T-cell (primary cell): ENCODE measurements at regions of chr11 and their contacts with region 1.

Region 1: DNA sequence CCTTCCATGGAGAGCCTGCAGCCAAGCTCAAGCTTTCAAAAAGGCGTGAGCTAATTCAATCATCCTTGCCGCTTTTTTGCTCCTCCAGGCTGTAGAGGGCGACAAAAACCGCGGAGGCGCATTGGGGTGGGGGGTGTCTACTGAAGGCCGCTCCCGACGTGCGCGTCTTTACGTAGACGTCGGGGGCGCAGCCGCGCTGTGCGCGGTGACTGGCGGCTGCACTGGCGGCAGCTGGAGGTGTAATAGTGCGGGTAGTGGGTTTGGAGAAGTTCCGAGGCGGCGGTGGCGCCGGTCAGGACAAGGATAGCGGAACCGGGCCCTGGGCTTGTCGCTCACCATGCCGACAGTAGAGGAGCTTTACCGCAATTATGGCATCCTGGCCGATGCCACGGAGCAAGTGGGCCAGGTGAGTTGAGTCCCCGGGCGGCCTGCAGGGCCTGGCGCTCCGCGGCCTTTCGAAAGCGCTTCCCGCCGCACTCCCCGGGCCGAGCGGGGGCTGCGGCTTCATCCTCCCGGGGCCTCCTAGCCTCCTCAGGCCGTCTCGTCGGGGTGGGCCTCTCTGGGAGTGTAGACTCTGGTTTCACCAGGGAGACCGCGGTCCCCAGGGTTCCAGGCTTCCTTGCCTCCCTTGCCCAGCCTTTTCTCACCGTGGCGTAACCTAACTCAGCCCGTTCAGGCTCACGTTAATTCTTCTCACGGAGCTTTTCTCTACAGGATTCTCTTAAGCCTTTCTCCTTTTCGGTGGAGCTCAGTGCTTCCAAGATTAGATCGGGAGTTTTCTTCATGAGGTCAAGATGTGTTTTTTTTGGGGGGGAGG is at the start of gene API5:
- DNase-seq: peak; percentile 82 to 94 (median 91)
- ATAC-seq: peak; percentile 97 to 99 (median 98)
- H3K4me3 ChIP-seq: peak within 1 kb of the TSS; percentile 71 to 74
- H3K4me3 Mint-ChIP-seq: peak within 1 kb of the TSS; percentile 90 to 99 (median 98)
- H3K27ac ChIP-seq: peak within 1 kb of the TSS; percentile 55
- H3K27ac Mint-ChIP-seq: peak within 1 kb of the TSS; percentile 88 to 90
- H3K4me1 ChIP-seq: peaks cover 22 to 31% of the 10 kb centered on the region in 2 experiments
- H3K4me1 Mint-ChIP-seq: peaks cover 48 to 52% (median 51%) of the 10 kb centered on the region in 3 donors
- H3K27me3 ChIP-seq: no peaks in the 10 kb centered on the region
- H3K27me3 Mint-ChIP-seq: no peaks in the 10 kb centered on the region
- total RNA-seq, gene API5: 71.1 to 101 (median 97.2) TPM

Region 2: GRCh38 chr11:42465623-42466022 is 846.4 kb before region 1 on chr11:
- CTCF ChIA-PET with region 1: no interaction called
- POLR2A ChIA-PET with region 1: no interaction called
- DNase-seq: no peak
- ATAC-seq: no peak
- H3K4me3 ChIP-seq: no peak overlapping the region
- H3K4me3 Mint-ChIP-seq: no peak overlapping the region
- H3K27ac ChIP-seq: no peak overlapping the region
- H3K27ac Mint-ChIP-seq: no peak overlapping the region
- H3K4me1 ChIP-seq: no peaks in the 10 kb centered on the region
- H3K4me1 Mint-ChIP-seq: no peaks in the 10 kb centered on the region
- H3K27me3 ChIP-seq: no peaks in the 10 kb centered on the region
- H3K27me3 Mint-ChIP-seq: no peaks in the 10 kb centered on the region

Region 3: GRCh38 chr11:43358801-43359421 is 46.9 kb after region 1 on chr11 and contains the start of gene TTC17:
- CTCF ChIA-PET with region 1: interaction called, 3 to 29 read pairs
- POLR2A ChIA-PET with region 1: interaction called, 3 to 16 read pairs
- DNase-seq: peak; percentile 83 to 95 (median 91)
- ATAC-seq: peak; percentile 97 to 98 (median 98)
- H3K4me3 ChIP-seq: peak within 1 kb of the TSS; percentile 86 to 98
- H3K4me3 Mint-ChIP-seq: peak within 1 kb of the TSS; percentile 95 to 98 (median 98)
- H3K27ac ChIP-seq: peak within 1 kb of the TSS; percentile 93
- H3K27ac Mint-ChIP-seq: peak within 1 kb of the TSS; percentile 99
- H3K4me1 ChIP-seq: peaks cover 15 to 25% of the 10 kb centered on the region in 2 experiments
- H3K4me1 Mint-ChIP-seq: peaks cover 52 to 53% (median 52%) of the 10 kb centered on the region in 3 donors
- H3K27me3 ChIP-seq: no peaks in the 10 kb centered on the region
- H3K27me3 Mint-ChIP-seq: no peaks in the 10 kb centered on the region
- total RNA-seq, gene TTC17: 72.4 to 123 (median 94.8) TPM

Region 4: GRCh38 chr11:43680521-43681400 is 368.8 kb after region 1 on chr11 and contains the start of gene HSD17B12:
- CTCF ChIA-PET with region 1: interaction called in 1 of 2 experiments, 10 read pairs
- POLR2A ChIA-PET with region 1: interaction called in 1 of 2 experiments, 3 read pairs
- DNase-seq: peak; percentile 94 to 100 (median 99)
- ATAC-seq: peak; percentile 93 to 98 (median 96)
- H3K4me3 ChIP-seq: peak within 1 kb of the TSS; percentile 79 to 91
- H3K4me3 Mint-ChIP-seq: peak within 1 kb of the TSS; percentile 86 to 96 (median 91)
- H3K27ac ChIP-seq: peak within 1 kb of the TSS; percentile 90
- H3K27ac Mint-ChIP-seq: peak within 1 kb of the TSS; percentile 91 to 92
- H3K4me1 ChIP-seq: peaks cover 7 to 18% of the 10 kb centered on the region in 2 experiments
- H3K4me1 Mint-ChIP-seq: peaks cover 41 to 49% (median 44%) of the 10 kb centered on the region in 3 donors
- H3K27me3 ChIP-seq: no peaks in the 10 kb centered on the region
- H3K27me3 Mint-ChIP-seq: no peaks in the 10 kb centered on the region
- total RNA-seq, gene HSD17B12: 17.9 to 25.6 (median 23.8) TPM

Region 5: DNA sequence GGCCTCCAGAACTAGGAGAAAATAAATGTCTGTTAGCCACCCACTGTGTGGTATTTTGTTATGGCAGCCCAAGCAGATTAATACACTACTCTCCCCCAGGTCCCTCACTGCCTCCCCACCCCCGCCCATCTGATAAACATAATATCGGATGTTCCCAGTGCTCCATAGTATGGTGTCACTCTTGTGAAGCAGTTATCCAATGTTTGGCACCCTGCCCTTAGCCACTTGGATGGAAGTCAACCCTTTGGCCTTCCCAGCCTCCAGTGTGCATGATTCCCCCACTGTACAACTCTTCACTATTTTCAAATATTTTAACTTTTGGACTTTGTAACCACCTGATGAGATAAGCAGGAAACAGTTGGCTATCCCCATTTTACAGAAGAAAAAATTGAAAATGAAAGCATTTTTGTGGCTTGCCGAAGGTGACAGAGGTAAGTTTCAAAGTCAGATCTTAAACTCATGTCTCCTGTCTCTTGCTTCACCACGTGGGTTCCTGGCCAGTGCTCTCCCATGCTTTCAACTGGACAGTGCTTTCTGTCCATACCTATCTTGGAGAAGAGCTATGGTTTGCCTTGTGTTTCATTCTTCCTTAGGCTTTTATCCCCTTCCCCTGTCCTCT is 944.8 kb after region 1 on chr11:
- CTCF ChIA-PET with region 1: no interaction called
- POLR2A ChIA-PET with region 1: no interaction called
- DNase-seq: no peak
- ATAC-seq: no peak
- H3K4me3 ChIP-seq: no peak overlapping the region
- H3K4me3 Mint-ChIP-seq: peak overlapping the region in 2 of 3 donors; percentile 16 to 28
- H3K27ac ChIP-seq: no peak overlapping the region
- H3K27ac Mint-ChIP-seq: peak overlapping the region; percentile 50 to 72
- H3K4me1 ChIP-seq: peaks cover 0 to 22% of the 10 kb centered on the region in 2 experiments
- H3K4me1 Mint-ChIP-seq: peaks cover 7 to 39% (median 18%) of the 10 kb centered on the region in 3 donors
- H3K27me3 ChIP-seq: peaks cover 0 to 4% of the 10 kb centered on the region in 2 experiments
- H3K27me3 Mint-ChIP-seq: no peaks in the 10 kb centered on the region